ENCODE measurements at regions of chr5 and their contacts with region 1.

Region 1: DNA sequence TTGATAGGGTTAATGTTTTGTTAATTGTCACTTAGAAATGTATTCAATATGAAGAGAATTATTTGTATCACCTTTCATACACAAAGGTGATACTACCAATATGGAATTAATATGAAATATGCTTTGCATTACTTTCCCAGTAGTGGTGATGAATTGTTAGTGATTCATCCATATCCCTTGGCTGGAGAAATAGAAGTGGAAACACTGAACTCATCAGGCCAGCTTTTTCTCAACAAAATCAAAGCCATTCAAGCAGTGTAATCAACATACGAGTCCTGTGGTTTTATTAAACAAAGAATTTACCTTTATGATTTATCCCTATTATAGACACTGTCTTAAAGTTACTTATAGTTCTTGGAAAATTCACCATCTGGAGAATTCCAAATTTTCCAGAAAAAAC is 264.0 kb upstream of the MEF2C start:
- DNase-seq: no peak
- ATAC-seq: no peak
- H3K4me3 ChIP-seq: no peak overlapping the region
- H3K27ac ChIP-seq: no peak overlapping the region
- H3K4me1 ChIP-seq: peaks cover 0 to 1% of the 10 kb centered on the region in 2 donors
- H3K27me3 ChIP-seq: no peaks in the 10 kb centered on the region

Region 2: DNA sequence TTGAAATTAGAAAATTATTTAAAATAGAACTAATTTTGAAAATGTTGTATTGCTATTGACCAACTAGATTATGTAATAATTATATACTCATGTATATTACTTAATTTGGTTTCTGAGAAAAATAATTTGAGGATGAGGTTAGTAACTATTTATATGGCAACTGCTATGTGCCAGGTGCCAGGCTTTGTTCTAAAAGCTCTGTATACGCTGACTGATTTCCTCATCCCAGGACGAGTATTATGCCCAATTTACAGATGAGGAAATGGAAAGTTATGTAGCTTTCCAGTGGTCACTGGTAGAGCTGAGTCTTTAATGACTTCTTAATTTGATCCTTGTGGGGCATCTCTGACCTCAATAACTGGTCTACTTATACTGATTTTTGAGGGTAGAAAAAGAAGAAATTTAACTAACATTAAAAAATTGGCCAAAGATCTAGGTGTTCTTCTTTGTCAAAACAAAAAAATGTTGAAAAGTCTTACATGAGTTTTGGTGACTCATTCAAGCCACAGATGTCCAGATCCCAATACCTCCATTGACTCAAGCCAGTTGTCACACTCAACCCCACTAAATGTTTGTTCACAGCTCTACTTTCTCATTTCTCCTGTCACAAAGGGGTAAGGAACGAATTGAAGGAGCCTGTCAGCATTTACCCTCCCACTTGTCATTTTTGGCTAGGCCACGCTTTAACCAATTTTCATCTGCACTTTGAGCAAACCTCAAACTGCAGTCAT is 36.0 kb before region 1 on chr5:
- intact Hi-C with region 1: no loop called
- DNase-seq: no peak
- ATAC-seq: no peak
- H3K4me3 ChIP-seq: no peak overlapping the region
- H3K27ac ChIP-seq: no peak overlapping the region
- H3K4me1 ChIP-seq: no peaks in the 10 kb centered on the region
- H3K27me3 ChIP-seq: no peaks in the 10 kb centered on the region

Region 3: DNA sequence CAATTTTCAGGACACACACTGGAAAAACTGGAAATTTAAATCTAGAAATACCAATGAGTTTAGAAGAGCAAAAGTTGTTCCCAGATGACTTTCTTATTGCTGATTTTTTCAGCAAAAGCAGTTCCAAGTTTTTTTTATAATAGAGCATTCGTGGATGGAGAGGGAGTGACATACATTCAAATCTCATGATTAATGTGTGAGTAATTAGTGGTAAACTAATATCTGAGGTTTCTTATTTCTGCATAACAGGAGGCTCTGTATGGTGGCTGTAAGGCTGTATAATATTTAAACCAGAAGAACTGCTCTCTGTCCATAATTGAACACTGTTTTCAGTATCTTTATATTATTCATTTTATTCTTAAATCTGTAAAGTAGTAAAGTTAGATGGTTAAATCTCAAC is 1356.6 kb after region 1 on chr5:
- intact Hi-C with region 1: loop called in 1 of 2 experiments (anchors 10 kb)
- DNase-seq: no peak
- ATAC-seq: no peak
- H3K4me3 ChIP-seq: no peak overlapping the region
- H3K27ac ChIP-seq: no peak overlapping the region
- H3K4me1 ChIP-seq: no peaks in the 10 kb centered on the region
- H3K27me3 ChIP-seq: no peaks in the 10 kb centered on the region

Measured in aorta (tissue), 5 donors.